Calu3 (cell line): ENCODE measurements at regions of chr17 and their contacts with region 1.

Region 1: DNA sequence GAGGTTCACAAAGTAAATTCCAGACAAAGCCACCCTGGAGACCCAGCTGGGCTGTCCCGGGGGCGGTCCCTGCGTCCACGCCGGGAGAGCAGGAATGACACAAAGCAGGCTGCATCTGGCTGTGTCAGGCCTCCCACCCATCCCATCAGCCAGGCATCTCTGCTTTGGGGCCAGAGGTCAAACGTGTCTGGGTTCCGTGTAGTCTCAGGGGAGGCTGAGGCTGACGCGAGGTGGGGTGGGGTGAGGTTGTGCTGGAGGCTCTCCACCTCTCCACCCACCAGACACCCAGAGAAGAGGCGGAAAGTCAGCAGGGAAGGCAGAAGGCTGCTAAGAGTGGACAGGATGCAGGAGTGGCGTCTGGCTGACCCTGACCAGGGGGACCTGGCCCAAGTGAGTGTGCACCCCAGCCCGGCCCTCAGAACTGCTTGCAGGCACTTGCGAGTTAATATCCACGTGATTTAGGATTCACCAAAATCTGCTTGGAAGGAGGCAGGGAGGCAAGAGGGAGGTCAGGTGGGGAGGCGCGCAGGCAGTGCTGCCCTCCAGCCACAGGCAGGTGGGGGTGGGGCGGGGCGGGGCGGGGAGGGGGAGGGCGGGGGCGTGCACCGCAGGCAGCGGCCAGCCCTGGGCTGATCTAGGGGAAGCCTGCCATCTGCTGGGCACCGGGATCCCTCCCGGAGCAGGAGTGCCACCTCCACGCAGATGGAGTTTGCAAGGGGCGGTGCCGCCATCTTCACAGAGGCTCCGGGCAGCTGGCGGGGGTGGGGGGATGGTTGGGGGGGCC is 44.3 kb downstream of the TBC1D16 start:
- DNase-seq: peak; percentile 94
- H3K4me3 Mint-ChIP-seq: peak overlapping the region; percentile 65
- H3K27ac Mint-ChIP-seq: peak overlapping the region; percentile 83
- H3K4me1 Mint-ChIP-seq: peaks cover 62% of the 10 kb centered on the region
- H3K27me3 Mint-ChIP-seq: no peaks in the 10 kb centered on the region
- CTCF ChIP-seq: peak; percentile 77

Region 2: DNA sequence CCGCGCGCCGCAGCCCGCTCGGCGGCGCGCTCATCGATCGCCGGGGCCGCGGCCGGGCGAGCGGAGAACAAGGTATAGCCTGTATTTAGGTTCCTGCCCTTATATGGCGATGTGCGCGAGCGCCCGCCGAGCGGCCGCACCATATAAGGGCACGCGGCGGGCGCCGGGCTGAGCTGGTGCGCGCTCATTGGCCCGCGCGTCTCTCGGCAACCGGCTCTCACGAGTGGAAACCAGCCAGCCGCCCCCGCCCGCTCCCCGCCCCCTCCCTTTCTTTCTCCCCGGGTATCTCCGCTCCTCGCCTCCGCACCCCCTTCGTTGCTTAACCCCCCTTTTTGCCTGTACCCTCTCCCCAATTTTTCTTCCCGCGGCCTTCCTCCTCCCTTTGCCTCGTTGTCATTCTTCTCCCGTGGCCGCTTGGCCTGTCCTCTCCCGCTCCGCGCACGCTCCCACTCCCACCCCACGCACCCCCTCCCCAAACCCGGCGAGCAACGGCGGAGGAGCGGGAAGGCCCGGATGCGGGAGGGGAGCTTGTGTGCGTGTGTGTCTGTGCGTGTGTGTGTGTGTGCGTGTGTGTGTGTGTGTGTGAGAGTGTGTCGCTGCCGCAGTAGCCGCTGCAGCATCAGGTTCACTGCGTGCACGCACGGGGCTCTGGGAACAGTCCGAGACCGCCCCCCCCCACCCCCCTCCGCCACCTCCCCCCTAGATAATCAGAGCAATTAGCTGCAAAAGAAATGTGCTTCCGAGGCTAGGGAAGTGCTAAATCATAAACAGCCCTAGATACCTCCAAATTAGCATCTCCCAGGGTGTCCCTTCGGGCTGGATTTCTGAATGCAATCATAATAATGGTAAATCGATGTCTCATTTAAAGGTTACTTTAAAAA is 181.0 kb before region 1 on chr17:
- CTCF ChIA-PET with region 1: interaction called, 10 read pairs
- intact Hi-C with region 1: loop called (anchors 5 kb)
- DNase-seq: peak; percentile 88
- H3K4me3 Mint-ChIP-seq: peak overlapping the region; percentile 65
- H3K27ac Mint-ChIP-seq: peak overlapping the region; percentile 48
- H3K4me1 Mint-ChIP-seq: peaks cover 22% of the 10 kb centered on the region
- H3K27me3 Mint-ChIP-seq: peaks cover 52% of the 10 kb centered on the region
- CTCF ChIP-seq: no peak

Region 3: DNA sequence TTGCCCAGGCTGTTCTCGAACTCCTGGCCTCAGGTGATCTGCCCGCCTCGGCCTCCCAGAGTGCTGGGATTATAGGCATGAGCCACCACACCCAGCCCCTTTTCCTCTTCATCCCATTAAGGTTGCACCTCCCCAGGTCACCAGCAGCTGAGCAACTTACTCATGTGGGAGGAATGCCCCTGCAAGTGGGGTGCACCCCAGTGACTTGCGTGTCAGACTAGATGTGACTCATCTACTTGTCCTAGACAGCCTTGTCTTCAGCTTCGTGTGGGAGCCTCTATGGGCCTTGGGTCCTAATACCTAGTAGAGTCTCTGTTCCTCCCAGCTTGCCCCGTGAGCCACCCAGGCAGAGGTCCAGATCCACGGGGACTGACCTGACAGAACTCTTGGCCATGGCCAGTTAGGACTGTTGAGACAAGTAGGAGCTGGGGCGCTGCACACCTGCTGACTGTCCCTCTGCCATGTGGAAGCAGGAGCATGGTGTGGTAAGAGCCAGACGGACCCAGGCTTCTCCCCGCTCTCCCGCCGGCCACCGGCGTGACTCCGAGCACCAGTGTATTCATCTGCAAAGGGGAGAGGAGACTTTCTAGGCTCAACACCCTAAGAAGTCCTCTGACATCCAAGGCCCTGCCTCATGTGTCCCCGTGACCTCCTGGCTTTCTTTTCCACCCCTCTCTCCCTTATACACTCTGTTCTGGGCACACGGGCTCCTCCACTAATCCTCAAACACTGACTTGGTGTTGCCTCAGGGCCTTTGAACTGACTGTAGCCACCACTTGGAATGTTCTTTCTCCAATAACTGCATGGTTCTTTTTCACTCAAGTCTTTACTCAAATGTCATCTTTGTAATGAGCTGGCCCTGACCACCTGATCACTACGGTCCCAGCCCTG is 140.5 kb before region 1 on chr17:
- CTCF ChIA-PET with region 1: interaction called, 9 read pairs
- intact Hi-C with region 1: loop called (anchors 5 kb)
- DNase-seq: peak; percentile 74
- H3K4me3 Mint-ChIP-seq: peak overlapping the region; percentile 4
- H3K27ac Mint-ChIP-seq: peak overlapping the region; percentile 86
- H3K4me1 Mint-ChIP-seq: peaks cover 30% of the 10 kb centered on the region
- H3K27me3 Mint-ChIP-seq: peaks cover 10% of the 10 kb centered on the region
- CTCF ChIP-seq: no peak

Region 4: DNA sequence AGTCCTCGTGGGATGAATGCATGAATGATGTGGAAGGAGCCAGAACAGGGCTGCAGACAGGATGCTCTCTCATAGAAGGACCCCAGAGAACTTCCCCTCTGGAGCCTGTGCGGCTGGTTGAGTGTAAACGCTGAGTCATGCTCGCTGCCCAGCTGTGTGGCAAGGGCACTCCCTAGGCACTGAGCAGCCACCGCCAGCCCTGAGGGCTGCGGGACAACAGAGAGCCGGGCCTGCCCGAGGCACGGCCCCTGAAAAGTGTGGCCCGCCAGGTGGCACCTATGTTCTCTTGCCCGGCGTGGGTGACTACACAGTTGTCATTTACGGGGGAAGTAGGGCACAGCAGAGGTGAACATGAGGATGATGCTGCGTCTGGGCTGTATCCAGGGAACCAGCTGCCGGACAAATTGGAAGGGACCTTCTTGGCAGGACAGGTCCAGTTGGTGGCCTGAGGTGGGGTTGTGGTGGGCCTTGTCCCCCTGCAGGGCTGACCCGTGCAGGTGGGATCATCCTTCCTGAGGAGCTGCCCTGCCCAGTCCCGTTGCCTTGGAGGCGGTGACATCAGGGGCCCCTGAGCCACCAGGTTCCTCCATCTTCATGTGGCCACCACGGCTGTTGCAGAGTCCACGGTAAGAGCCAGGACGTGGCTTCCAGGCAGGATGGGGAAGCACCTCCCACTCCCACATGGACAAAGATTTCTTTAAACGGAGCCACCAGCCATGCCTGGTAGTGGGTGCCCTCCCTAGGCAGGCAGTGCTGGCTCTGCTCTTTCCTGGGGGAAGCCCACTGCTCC is 57.3 kb before region 1 on chr17:
- CTCF ChIA-PET with region 1: no interaction called
- intact Hi-C with region 1: loop called (anchors 5 kb)
- DNase-seq: peak; percentile 66
- H3K4me3 Mint-ChIP-seq: peak overlapping the region; percentile 32
- H3K27ac Mint-ChIP-seq: peak overlapping the region; percentile 66
- H3K4me1 Mint-ChIP-seq: peaks cover 28% of the 10 kb centered on the region
- H3K27me3 Mint-ChIP-seq: no peaks in the 10 kb centered on the region
- CTCF ChIP-seq: no peak

Region 5: DNA sequence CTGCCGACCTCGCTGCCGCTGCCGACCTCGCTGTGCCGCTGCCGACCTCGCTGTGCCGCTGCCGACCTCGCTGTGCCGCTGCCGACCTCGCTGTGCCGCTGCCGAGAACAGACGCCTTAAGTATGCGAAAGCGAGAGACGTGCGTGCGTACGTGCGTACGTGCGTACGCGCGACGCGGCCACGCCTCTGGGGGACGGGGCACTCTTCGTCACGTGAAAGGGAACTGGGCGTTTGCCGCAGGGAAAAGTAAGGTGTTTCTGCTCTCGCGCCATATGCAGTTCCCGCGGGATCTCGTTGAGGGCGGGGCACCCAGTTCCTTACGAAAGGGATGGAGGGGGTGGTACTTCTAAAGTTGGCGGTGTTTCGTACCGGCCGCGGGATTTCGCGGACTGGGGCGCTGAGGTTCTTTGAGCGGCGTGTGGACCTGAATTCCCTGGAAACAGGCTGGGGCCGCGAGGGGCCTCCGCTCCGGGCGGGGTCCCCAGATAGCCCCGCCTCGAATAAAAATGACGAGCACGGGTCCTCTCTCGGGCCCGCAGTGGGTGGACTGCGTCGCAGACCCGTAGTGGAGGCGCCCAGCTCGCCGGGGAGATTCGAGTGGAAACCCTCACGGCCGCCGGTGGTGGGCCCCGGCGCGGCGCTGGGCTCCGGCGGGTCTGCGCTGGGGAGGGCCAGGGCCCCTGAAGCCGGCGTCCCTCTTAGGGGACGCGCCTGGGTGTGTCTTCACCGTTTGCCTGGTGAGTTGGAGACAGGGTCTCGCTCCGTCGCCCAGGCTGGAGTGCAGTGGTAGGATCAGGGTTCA is 155.9 kb after region 1 on chr17 and contains the start of gene EIF4A3:
- CTCF ChIA-PET with region 1: no interaction called
- intact Hi-C with region 1: no loop called
- DNase-seq: peak; percentile 97
- H3K4me3 Mint-ChIP-seq: peak within 1 kb of the TSS; percentile 75
- H3K27ac Mint-ChIP-seq: peak within 1 kb of the TSS; percentile 96
- H3K4me1 Mint-ChIP-seq: peaks cover 12% of the 10 kb centered on the region
- H3K27me3 Mint-ChIP-seq: no peaks in the 10 kb centered on the region
- CTCF ChIP-seq: no peak
- total RNA-seq, gene EIF4A3: 124 and 125 TPM in 2 replicates